ENCODE measurements at regions of chr2 and their contacts with region 1.

Region 1: DNA sequence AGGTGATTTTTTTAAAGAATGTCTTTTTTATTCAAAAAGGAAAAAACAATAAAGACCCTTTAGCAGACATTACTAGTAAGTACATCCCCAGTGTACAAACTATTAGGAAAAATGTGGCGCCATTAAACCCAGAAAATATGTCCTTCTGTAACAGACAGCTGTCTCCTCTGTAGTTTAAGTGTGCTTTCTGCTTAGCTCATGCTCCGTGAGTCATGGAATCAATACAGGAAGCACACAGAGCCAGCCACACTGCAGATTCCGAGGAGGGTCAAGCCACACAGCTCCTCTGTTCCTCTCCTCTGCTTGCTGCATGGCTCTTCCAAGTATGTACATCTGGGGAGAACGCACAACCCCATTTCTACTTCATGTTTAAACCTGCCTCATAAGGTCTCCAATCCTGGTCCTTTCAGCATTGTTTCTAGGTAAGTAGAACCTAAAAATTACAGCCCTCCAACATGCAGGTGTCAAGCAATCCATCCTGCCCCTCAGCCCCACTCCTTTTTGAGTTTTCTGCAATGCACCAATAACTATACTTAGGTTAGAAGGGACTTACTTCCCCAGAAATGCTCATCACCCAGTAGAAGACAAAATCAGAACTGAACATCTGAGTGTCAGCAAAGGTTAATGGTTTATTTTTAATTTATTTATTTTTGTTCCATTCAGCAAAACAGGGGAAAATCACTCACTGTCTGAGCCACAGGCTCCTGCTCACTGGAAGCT is 37.5 kb downstream of the ACVR1 start:
- DNase-seq: peak; percentile 67
- H3K4me3 Mint-ChIP-seq: no peak overlapping the region
- H3K27ac Mint-ChIP-seq: peak overlapping the region; percentile 71
- H3K4me1 Mint-ChIP-seq: peaks cover 29% of the 10 kb centered on the region
- H3K27me3 Mint-ChIP-seq: no peaks in the 10 kb centered on the region
- CTCF ChIP-seq: no peak

Region 2: GRCh38 chr2:157603198-157603597 is 235.4 kb before region 1 on chr2:
- CTCF ChIA-PET with region 1: no interaction called
- POLR2A ChIA-PET with region 1: no interaction called
- intact Hi-C with region 1: no loop called
- DNase-seq: no peak
- H3K4me3 Mint-ChIP-seq: no peak overlapping the region
- H3K27ac Mint-ChIP-seq: no peak overlapping the region
- H3K4me1 Mint-ChIP-seq: no peaks in the 10 kb centered on the region
- H3K27me3 Mint-ChIP-seq: peaks cover 89% of the 10 kb centered on the region
- CTCF ChIP-seq: no peak

Region 3: GRCh38 chr2:157784169-157784822 is 54.3 kb before region 1 on chr2:
- CTCF ChIA-PET with region 1: interaction called, 13 read pairs
- POLR2A ChIA-PET with region 1: interaction called, 4 read pairs
- intact Hi-C with region 1: no loop called
- DNase-seq: peak; percentile 88
- H3K4me3 Mint-ChIP-seq: peak overlapping the region; percentile 66
- H3K27ac Mint-ChIP-seq: peak overlapping the region; percentile 79
- H3K4me1 Mint-ChIP-seq: peaks cover 41% of the 10 kb centered on the region
- H3K27me3 Mint-ChIP-seq: no peaks in the 10 kb centered on the region
- CTCF ChIP-seq: no peak